Lower lobe of right lung (tissue), 2 donors: ENCODE measurements at regions of chr15 and their contacts with region 1.

Region 1: GRCh38 chr15:94324117-94324826 is 92.9 kb downstream of the MCTP2 start:
- DNase-seq: no peak
- ATAC-seq: peak; percentile 91 to 96
- H3K4me3 ChIP-seq: no peak overlapping the region
- H3K27ac ChIP-seq: no peak overlapping the region
- H3K4me1 ChIP-seq: no peaks in the 10 kb centered on the region
- H3K27me3 ChIP-seq: no peaks in the 10 kb centered on the region
- CTCF ChIP-seq: peak; percentile 95

Region 2: DNA sequence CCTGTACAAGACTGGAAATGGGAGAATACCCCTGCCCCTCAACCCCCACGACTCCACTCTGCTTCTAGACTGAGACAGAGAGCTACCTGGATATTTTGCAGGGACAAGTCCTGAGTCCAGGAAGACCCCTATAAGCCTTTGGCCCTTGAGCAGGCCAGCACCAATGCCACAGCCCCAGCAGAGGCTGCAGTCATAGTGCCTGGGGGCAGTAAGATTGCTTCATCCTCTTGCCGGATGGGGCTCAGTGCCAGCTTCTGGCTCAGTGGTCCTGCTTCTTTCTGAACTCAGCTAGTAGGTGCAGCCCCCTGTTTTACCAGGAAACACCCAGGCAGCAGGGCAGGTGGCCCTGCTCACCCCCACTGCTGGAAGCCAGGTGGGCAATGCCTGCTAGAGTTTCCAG is 511.3 kb before region 1 on chr15:
- intact Hi-C with region 1: no loop called
- DNase-seq: no peak
- ATAC-seq: no peak
- H3K4me3 ChIP-seq: no peak overlapping the region
- H3K27ac ChIP-seq: no peak overlapping the region
- H3K4me1 ChIP-seq: no peaks in the 10 kb centered on the region
- H3K27me3 ChIP-seq: no peaks in the 10 kb centered on the region
- CTCF ChIP-seq: no peak

Region 3: DNA sequence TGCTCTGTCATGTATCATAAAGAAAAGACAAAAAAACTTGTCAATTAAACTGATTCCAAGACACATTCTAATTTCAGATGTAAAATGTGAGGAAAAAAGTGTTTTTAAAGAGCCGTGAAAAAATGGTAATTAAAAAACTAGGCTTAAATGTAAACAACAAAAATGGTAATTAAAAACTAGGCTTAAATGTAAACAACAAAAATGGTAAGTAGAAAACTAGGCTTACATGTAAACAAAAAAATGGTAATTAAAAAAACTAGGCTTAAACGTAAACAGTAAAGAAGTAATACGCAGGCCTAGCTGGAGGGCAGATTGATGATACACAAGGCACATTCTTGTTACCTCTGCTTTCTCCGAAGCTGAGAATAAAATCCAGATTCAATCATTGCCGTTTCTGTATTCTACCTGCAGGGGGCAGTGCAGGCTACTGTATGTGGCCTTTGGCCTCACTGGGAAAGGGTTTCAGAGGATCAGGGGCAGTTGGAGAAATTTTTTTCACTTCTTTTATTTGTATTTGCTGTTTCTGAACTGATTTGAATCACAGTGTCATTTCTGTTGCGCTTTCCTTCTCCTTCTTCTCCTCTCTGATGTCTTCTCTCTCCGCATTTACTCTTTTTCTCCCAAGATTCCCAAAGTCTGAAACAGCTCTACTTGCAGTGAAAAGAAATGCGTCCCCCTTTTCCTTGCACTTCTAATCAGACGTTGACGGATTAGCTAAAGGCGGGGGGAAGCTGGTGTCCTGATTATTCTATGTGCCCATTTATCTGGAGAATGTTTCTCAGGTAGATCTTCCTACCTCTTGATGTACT is 160.1 kb before region 1 on chr15:
- intact Hi-C with region 1: loop called (anchors 5 kb)
- DNase-seq: no peak
- ATAC-seq: peak; percentile 77 to 83
- H3K4me3 ChIP-seq: no peak overlapping the region
- H3K27ac ChIP-seq: no peak overlapping the region
- H3K4me1 ChIP-seq: no peaks in the 10 kb centered on the region
- H3K27me3 ChIP-seq: no peaks in the 10 kb centered on the region
- CTCF ChIP-seq: peak; percentile 86